Kidney (tissue), 22 donors: ENCODE measurements at regions of chr3 and their contacts with region 1.

Region 1: GRCh38 chr3:159252772-159253384 is 451.0 kb downstream of the MFSD1 start:
- DNase-seq: peak in 2 of 5 donors; percentile 21 to 22
- H3K4me3 ChIP-seq: no peak overlapping the region
- H3K27ac ChIP-seq: no peak overlapping the region
- H3K4me1 ChIP-seq: no peaks in the 10 kb centered on the region
- H3K27me3 ChIP-seq: no peaks in the 10 kb centered on the region
- CTCF ChIP-seq: peak; percentile 10

Region 2: GRCh38 chr3:158845765-158846350 is 407.0 kb before region 1 on chr3:
- intact Hi-C with region 1: loop called (anchors 10 kb)
- DNase-seq: peak in 2 of 5 donors; percentile 48 to 53
- H3K4me3 ChIP-seq: no peak overlapping the region
- H3K27ac ChIP-seq: no peak overlapping the region
- H3K4me1 ChIP-seq: no peaks in the 10 kb centered on the region
- H3K27me3 ChIP-seq: no peaks in the 10 kb centered on the region
- CTCF ChIP-seq: peak; percentile 68

Region 3: GRCh38 chr3:158918008-158918407 is 334.9 kb before region 1 on chr3:
- intact Hi-C with region 1: loop called (anchors 10 kb)
- DNase-seq: peak in 4 of 5 donors; percentile 61 to 80 (median 72)
- H3K4me3 ChIP-seq: no peak overlapping the region
- H3K27ac ChIP-seq: no peak overlapping the region
- H3K4me1 ChIP-seq: no peaks in the 10 kb centered on the region
- H3K27me3 ChIP-seq: no peaks in the 10 kb centered on the region
- CTCF ChIP-seq: peak; percentile 58